Activated CD4-positive, alpha-beta T cell treated with anti-CD3 and anti-CD28 coated beads, Interleukin-2, amount 10 ng/mL, durations not matched to agents 24 days and 14 days (primary cell): ENCODE measurements at regions of chr4 and their contacts with region 1.

Region 1: GRCh38 chr4:105471566-105472176 is 2.2 kb downstream of the PPA2 start:
- DNase-seq: peak; percentile 92
- H3K4me3 Mint-ChIP-seq: peak overlapping the region; percentile 72
- H3K27ac Mint-ChIP-seq: peak overlapping the region; percentile 7
- H3K4me1 Mint-ChIP-seq: peaks cover 29% of the 10 kb centered on the region
- H3K27me3 Mint-ChIP-seq: peaks cover 5% of the 10 kb centered on the region

Region 2: GRCh38 chr4:104860238-104861123 is 611.2 kb before region 1 on chr4:
- intact Hi-C with region 1: loop called (anchors 5 kb)
- DNase-seq: peak; percentile 86
- H3K4me3 Mint-ChIP-seq: no peak overlapping the region
- H3K27ac Mint-ChIP-seq: no peak overlapping the region
- H3K4me1 Mint-ChIP-seq: no peaks in the 10 kb centered on the region
- H3K27me3 Mint-ChIP-seq: peaks cover 14% of the 10 kb centered on the region

Region 3: DNA sequence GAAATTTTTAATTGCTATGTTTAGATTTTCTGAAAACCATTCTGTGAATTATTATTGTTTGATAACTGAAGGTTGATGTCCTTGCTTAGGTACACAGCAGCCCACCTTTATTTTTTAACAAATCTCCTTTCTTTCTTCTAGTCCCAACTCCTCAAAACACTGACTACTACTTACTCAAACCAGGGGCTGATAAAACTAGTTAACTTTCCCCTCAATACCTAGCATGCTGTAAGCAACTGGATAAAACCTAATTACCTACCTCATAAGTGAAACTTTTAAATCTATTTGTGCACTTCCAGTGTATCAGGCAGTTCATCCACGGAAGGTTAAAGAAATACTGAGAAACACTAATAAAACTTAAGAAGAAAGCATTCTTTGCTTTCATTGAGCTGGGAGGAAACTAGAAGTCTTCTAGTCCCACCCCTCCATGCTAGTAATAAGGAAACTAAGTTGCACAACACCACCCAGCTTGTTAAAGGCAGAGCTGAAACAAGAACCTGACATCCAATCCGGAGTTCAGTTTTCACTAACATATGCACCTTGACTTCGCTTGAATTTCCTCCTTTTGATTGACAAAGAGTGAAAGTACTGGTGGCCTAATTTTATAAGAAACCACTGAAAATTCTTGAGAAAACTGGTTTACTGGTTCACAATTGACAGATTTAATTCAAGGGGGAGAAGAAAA is 505.2 kb before region 1 on chr4:
- intact Hi-C with region 1: loop called (anchors 1 kb)
- DNase-seq: peak; percentile 82
- H3K4me3 Mint-ChIP-seq: peak overlapping the region; percentile 71
- H3K27ac Mint-ChIP-seq: peak overlapping the region; percentile 87
- H3K4me1 Mint-ChIP-seq: peaks cover 10% of the 10 kb centered on the region
- H3K27me3 Mint-ChIP-seq: peaks cover 3% of the 10 kb centered on the region

Region 4: GRCh38 chr4:105140684-105141490 is 330.8 kb before region 1 on chr4:
- intact Hi-C with region 1: loop called (anchors 1 kb)
- DNase-seq: peak; percentile 83
- H3K4me3 Mint-ChIP-seq: no peak overlapping the region
- H3K27ac Mint-ChIP-seq: no peak overlapping the region
- H3K4me1 Mint-ChIP-seq: peaks cover 12% of the 10 kb centered on the region
- H3K27me3 Mint-ChIP-seq: no peaks in the 10 kb centered on the region

Region 5: DNA sequence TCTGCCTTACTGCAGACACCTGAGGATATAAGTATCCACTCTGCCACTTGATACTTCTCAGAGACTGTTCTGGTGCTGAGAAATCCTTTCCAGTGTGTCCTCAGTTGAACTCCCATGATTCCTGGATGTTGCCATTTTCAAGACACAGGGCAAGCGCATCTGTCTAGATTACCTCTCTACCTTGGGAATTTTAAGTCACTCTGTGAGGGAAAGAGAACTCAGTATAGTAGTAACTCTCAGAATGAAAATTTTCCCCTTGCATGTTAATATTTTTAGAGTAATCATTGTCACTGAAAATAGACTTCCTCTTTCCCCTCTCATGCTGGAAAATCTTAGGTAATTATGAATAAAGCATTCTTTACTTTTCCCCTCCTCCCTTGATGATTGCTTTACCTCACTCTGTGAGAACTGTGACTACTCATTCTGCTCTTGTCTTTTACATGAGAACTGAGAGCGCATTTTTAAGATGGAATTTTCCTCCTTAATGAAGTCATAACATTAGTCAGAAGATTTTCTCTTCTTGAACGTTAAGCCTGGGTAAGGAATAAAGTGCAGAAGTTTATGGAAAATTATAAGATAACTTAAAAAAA is 280.0 kb before region 1 on chr4:
- intact Hi-C with region 1: loop called (anchors 1 kb)
- DNase-seq: no peak
- H3K4me3 Mint-ChIP-seq: peak overlapping the region; percentile 8
- H3K27ac Mint-ChIP-seq: peak overlapping the region; percentile 79
- H3K4me1 Mint-ChIP-seq: peaks cover 45% of the 10 kb centered on the region
- H3K27me3 Mint-ChIP-seq: no peaks in the 10 kb centered on the region

Region 6: GRCh38 chr4:105306158-105306781 is 165.4 kb before region 1 on chr4:
- intact Hi-C with region 1: loop called (anchors 1 kb)
- DNase-seq: peak; percentile 83
- H3K4me3 Mint-ChIP-seq: peak overlapping the region; percentile 61
- H3K27ac Mint-ChIP-seq: peak overlapping the region; percentile 94
- H3K4me1 Mint-ChIP-seq: peaks cover 22% of the 10 kb centered on the region
- H3K27me3 Mint-ChIP-seq: no peaks in the 10 kb centered on the region

Region 7: GRCh38 chr4:105708530-105709391 is 237.1 kb after region 1 on chr4 and contains the starts of genes GSTCD and INTS12:
- intact Hi-C with region 1: loop called (anchors 2 kb)
- DNase-seq: peak; percentile 96
- H3K4me3 Mint-ChIP-seq: peak within 1 kb of the TSS; percentile 99
- H3K27ac Mint-ChIP-seq: peak within 1 kb of the TSS; percentile 94
- H3K4me1 Mint-ChIP-seq: peaks cover 15% of the 10 kb centered on the region
- H3K27me3 Mint-ChIP-seq: no peaks in the 10 kb centered on the region
- total RNA-seq, gene GSTCD: 17.5 and 22.0 TPM in 2 replicates
- total RNA-seq, gene INTS12: 23.6 and 24.4 TPM in 2 replicates

Region 8: GRCh38 chr4:105808750-105809041 is 337.0 kb after region 1 on chr4:
- intact Hi-C with region 1: no loop called
- DNase-seq: no peak
- H3K4me3 Mint-ChIP-seq: no peak overlapping the region
- H3K27ac Mint-ChIP-seq: no peak overlapping the region
- H3K4me1 Mint-ChIP-seq: peaks cover 2% of the 10 kb centered on the region
- H3K27me3 Mint-ChIP-seq: no peaks in the 10 kb centered on the region